ENCODE measurements at regions of chr1 and their contacts with region 1.

Region 1: DNA sequence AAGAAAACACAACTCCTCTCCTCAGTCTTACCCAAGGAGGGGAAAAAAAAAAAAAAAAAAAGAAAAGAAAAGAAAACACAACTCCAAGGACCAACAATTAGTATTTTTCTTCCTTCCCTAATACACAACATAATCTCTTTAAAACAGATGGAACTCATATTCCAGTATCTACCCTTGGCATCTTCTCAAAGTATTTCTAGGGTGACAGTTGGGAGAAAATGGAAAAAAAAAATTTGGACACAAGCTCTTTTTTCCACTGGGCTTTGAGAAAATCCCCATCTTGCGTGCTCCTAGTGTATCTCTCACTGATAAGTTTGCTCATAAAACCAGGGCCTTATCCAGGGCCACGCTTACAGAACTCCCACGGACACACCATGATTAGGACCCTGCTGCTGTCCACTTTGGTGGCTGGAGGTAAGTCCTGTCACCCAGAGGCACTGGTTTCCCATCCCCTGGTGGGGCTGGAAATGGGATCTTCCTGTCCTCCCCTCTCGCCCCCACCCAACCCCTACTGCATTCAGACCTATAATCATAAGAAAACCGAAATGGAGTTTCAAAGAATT is at the start of gene CELA2B:
- DNase-seq: no peak
- H3K4me3 Mint-ChIP-seq: no peak within 1 kb of the TSS
- H3K27ac Mint-ChIP-seq: no peak within 1 kb of the TSS
- H3K4me1 Mint-ChIP-seq: no peaks in the 10 kb centered on the region
- H3K27me3 Mint-ChIP-seq: no peaks in the 10 kb centered on the region
- CTCF ChIP-seq: no peak
- total RNA-seq, gene CELA2B: not detected in 2 replicates

Region 2: DNA sequence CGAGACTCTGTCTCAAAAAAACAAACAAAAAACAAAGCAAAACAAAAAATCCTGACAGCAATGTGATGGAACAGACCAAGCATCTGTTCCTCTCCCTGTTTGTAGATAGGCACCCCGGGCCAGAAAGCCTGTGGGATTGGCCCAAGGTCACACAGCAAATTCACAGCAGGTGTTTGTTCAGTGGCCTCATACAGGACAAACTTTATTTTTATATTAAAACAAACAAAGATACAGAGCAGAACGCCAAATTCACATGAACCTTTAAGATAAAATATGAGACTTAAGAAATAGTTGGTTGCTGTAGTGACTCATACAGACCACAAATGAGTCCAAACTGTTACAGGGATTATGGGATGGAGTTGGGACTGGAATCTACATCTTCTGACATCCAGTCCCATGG is 21.6 kb before region 1 on chr1:
- CTCF ChIA-PET with region 1: no interaction called
- intact Hi-C with region 1: loop called (anchors 2 kb)
- DNase-seq: no peak
- H3K4me3 Mint-ChIP-seq: no peak overlapping the region
- H3K27ac Mint-ChIP-seq: no peak overlapping the region
- H3K4me1 Mint-ChIP-seq: no peaks in the 10 kb centered on the region
- H3K27me3 Mint-ChIP-seq: no peaks in the 10 kb centered on the region
- CTCF ChIP-seq: no peak

Region 3: GRCh38 chr1:15760520-15761211 is 284.8 kb after region 1 on chr1:
- CTCF ChIA-PET with region 1: no interaction called
- intact Hi-C with region 1: no loop called
- DNase-seq: no peak
- H3K4me3 Mint-ChIP-seq: no peak overlapping the region
- H3K27ac Mint-ChIP-seq: no peak overlapping the region
- H3K4me1 Mint-ChIP-seq: peaks cover 20% of the 10 kb centered on the region
- H3K27me3 Mint-ChIP-seq: no peaks in the 10 kb centered on the region
- CTCF ChIP-seq: no peak

Measured in Calu3 (cell line).